Caki2 (cell line): ENCODE measurements at regions of chr20 and their contacts with region 1.

Region 1: DNA sequence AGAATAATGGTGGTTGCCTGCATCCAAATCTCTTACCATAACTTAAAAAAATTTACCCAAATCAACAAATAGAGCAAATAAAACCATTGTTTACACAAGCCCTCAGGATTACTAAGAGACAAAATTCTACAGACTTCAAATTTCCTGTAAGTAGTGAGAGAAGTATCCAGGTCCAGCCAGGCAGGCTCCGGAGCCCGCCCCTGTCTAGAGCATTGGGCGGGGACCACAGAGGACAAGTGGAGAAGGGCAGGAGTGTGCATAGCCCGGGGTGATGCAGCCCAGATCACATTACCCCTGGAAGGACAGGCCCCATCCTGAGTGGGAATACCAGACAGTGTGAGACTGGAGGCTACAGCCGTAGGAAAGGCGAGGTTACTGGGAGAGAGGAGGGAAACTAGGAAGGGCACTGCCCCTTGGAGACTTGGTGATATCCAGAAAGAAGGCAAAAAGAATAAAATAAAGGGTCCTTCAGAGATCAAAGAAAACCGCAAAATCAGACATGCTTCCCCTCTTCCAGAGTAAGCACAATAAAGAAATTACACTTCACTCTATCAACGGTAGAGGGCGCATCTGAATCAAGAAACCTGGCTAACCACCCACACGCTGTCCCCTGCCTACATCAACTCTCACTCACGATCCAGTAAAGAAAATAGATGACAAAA is 26.6 kb downstream of the RIN2 start:
- DNase-seq: peak; percentile 95

Region 2: DNA sequence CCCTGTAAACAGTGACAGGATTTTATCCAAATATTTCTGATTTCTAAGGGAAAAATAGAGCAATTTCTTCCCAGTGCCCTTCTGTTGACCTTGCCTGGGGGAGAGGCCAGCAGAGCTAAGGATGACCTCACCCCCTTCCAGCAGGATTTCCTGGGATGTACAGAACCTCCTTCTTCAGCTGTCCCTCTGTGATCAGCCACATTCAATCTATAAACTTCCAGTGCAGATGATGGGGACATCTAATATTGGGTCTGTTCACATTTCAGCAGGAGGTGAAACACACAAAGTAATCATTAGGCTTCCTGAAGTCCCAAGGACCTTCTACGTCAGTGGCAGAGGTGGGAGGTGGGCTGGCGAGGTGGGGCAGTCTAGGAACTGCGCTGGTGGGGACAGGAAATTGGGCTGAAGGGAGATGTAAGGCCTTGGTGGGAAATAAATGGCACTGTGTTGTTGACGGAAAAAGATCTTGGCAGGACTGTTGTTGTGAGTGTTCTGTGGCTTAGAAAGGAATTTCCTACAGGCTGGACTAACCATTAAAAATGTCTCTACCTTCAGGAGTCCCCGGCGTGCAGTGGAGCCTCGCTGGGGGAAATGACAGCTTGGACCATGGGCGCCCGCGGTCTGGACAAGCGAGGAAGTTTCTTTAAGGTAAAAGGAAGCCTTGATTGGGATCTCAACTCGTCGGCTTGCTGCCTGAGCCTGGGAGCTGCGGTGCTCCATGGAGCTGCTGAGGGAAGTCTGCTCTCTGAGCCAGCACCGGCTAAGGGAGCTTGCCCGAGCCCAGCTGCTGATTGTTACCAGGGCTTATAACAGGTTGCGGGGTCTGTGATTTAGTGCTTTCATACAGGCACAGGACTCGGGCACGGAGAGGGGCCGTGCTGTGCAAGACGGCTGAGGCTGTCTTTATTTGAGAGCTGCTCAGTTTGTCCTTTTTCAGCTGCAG is 104.6 kb after region 1 on chr20:
- in situ Hi-C with region 1: loop called (anchors 25 kb)
- DNase-seq: peak; percentile 63